ENCODE measurements at regions of chr2 and their contacts with region 1.

Region 1: GRCh38 chr2:65320042-65320725 is 92.6 kb downstream of the ACTR2 start:
- DNase-seq: peak; percentile 56
- H3K4me3 Mint-ChIP-seq: no peak overlapping the region
- H3K27ac Mint-ChIP-seq: peak overlapping the region; percentile 89
- H3K4me1 Mint-ChIP-seq: peaks cover 24% of the 10 kb centered on the region
- H3K27me3 Mint-ChIP-seq: no peaks in the 10 kb centered on the region

Region 2: GRCh38 chr2:65227425-65228262 is 92.5 kb before region 1 on chr2 and contains the start of gene ACTR2:
- CTCF ChIA-PET with region 1: interaction called, 5 read pairs
- POLR2A ChIA-PET with region 1: interaction called, 4 read pairs
- intact Hi-C with region 1: loop called (anchors 2 kb)
- DNase-seq: peak; percentile 97
- H3K4me3 Mint-ChIP-seq: peak within 1 kb of the TSS; percentile 100
- H3K27ac Mint-ChIP-seq: peak within 1 kb of the TSS; percentile 99
- H3K4me1 Mint-ChIP-seq: peaks cover 32% of the 10 kb centered on the region
- H3K27me3 Mint-ChIP-seq: no peaks in the 10 kb centered on the region
- total RNA-seq, gene ACTR2: 401 to 406 TPM

Region 3: DNA sequence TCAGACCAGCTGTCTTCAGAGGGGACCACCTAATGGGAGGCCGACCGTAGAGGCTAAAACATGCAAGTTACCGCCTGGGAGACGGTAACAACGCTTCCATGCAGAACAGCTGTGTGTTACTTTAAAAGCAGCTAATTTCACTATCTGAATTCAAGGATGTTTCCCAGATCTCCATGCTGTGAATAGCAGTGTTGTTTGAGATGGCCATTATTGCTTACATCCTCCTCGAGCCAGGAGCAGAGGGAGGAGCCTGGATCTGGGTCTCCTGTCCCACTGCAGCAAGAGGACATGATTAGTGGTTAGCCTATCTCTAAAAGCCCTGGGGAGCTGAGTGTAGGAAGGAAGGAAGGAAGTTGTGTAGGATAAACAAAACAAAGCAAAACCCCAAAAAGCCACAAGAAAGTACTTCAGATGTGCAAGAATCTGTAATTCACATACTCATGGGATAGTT is 41.6 kb before region 1 on chr2:
- CTCF ChIA-PET with region 1: interaction called, 8 read pairs
- POLR2A ChIA-PET with region 1: interaction called, 5 read pairs
- intact Hi-C with region 1: loop called (anchors 5 kb)
- DNase-seq: no peak
- H3K4me3 Mint-ChIP-seq: no peak overlapping the region
- H3K27ac Mint-ChIP-seq: no peak overlapping the region
- H3K4me1 Mint-ChIP-seq: peaks cover 14% of the 10 kb centered on the region
- H3K27me3 Mint-ChIP-seq: no peaks in the 10 kb centered on the region

Region 4: GRCh38 chr2:65357095-65357958 is 37.1 kb after region 1 on chr2:
- CTCF ChIA-PET with region 1: interaction called, 13 read pairs
- POLR2A ChIA-PET with region 1: interaction called, 17 read pairs
- intact Hi-C with region 1: loop called (anchors 1 kb)
- DNase-seq: peak; percentile 27
- H3K4me3 Mint-ChIP-seq: no peak overlapping the region
- H3K27ac Mint-ChIP-seq: peak overlapping the region; percentile 28
- H3K4me1 Mint-ChIP-seq: peaks cover 34% of the 10 kb centered on the region
- H3K27me3 Mint-ChIP-seq: no peaks in the 10 kb centered on the region

Region 5: DNA sequence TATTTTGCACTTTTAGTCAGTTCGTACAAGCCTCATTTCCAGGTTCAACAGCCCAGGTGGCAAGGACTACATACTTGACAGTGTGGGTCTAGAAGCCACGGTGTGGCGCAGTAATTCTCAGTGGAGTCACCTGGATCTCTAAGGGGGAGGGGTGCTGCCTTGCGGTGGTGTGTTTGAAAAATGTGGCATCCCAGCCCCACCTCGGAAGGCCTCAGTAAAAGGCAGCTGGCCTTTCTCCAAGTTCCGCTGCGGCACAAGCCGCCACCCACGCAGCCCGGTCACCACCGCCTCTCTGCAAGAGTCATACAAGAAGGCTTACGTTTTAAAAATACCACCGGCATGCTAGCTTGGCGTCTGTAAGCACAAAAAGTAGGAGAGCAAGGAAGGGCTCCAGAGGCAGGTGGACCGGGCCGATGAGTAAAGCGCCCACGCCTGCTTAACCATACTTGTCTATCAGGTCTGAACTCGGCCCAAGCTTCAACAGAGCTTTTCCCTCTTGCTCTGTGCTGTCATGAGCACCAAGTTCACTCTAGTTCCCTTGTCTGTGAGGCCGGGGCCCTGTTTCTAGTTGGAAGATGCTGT is 62.7 kb after region 1 on chr2:
- CTCF ChIA-PET with region 1: interaction called, 8 read pairs
- POLR2A ChIA-PET with region 1: interaction called, 5 read pairs
- intact Hi-C with region 1: loop called (anchors 1 kb)
- DNase-seq: peak; percentile 96
- H3K4me3 Mint-ChIP-seq: no peak overlapping the region
- H3K27ac Mint-ChIP-seq: no peak overlapping the region
- H3K4me1 Mint-ChIP-seq: peaks cover 28% of the 10 kb centered on the region
- H3K27me3 Mint-ChIP-seq: peaks cover 4% of the 10 kb centered on the region

Region 6: GRCh38 chr2:65576861-65577601 is 256.8 kb after region 1 on chr2:
- CTCF ChIA-PET with region 1: no interaction called
- POLR2A ChIA-PET with region 1: no interaction called
- intact Hi-C with region 1: loop called (anchors 1 kb)
- DNase-seq: no peak
- H3K4me3 Mint-ChIP-seq: no peak overlapping the region
- H3K27ac Mint-ChIP-seq: no peak overlapping the region
- H3K4me1 Mint-ChIP-seq: peaks cover 3% of the 10 kb centered on the region
- H3K27me3 Mint-ChIP-seq: peaks cover 2% of the 10 kb centered on the region

Measured in activated CD4-positive, alpha-beta memory T cell treated with anti-CD3 and anti-CD28 coated beads for 36 hours (primary cell).